ENCODE measurements at regions of chr11 and their contacts with region 1.

Region 1: GRCh38 chr11:58813693-58814092 is 30.8 kb downstream of the GLYATL2 start:
- DNase-seq: no peak
- H3K4me3 ChIP-seq: no peak overlapping the region
- H3K27ac ChIP-seq: no peak overlapping the region
- H3K4me1 ChIP-seq: no peaks in the 10 kb centered on the region
- H3K27me3 ChIP-seq: no peaks in the 10 kb centered on the region
- CTCF ChIP-seq: no peak
- POLR2A ChIP-seq: no peak

Region 2: DNA sequence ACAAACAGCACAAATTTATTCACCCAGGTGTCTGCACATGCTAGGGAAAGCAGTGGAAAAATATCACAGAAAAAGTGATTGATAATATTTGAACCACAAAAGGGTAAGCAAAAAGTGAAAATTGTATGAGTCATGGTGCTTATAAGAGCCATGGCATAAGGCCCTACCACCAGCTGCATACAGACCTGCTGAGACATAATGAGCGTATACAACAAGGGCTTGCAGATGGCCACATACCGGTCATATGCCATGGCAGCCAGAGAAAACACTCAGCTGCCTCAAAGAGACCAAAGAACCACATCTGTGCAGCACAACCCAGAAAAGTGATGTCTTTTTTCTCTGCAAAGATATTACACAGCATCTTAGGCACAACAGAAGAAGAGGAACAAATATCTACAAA is 1993.8 kb before region 1 on chr11:
- intact Hi-C with region 1: loop called (anchors 10 kb)
- DNase-seq: no peak
- H3K4me3 ChIP-seq: no peak overlapping the region
- H3K27ac ChIP-seq: no peak overlapping the region
- H3K4me1 ChIP-seq: no peaks in the 10 kb centered on the region
- H3K27me3 ChIP-seq: no peaks in the 10 kb centered on the region
- CTCF ChIP-seq: no peak
- POLR2A ChIP-seq: no peak

Region 3: GRCh38 chr11:58254936-58255335 is 558.8 kb before region 1 on chr11:
- intact Hi-C with region 1: no loop called
- DNase-seq: no peak
- H3K4me3 ChIP-seq: no peak overlapping the region
- H3K27ac ChIP-seq: no peak overlapping the region
- H3K4me1 ChIP-seq: no peaks in the 10 kb centered on the region
- H3K27me3 ChIP-seq: no peaks in the 10 kb centered on the region
- CTCF ChIP-seq: no peak
- POLR2A ChIP-seq: no peak

Region 4: DNA sequence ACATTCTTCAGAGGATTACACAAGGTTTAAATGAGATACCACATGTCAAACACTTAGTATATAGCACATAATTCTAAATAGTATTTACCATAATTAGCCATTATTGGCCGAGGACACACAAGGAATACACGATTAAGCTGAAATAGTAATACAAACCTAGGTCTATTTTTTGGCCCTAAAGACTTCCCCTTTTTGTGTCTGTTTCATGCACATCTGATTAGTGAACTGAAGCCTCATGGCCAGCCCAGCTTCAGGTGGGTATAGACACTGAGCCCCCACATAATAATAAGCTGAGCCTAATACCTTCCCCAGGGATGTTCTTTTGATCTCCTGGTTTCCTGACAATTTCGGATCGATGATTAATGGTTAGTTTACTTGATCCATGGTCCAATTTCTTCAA is 274.5 kb after region 1 on chr11:
- intact Hi-C with region 1: no loop called
- DNase-seq: no peak
- H3K4me3 ChIP-seq: no peak overlapping the region
- H3K27ac ChIP-seq: no peak overlapping the region
- H3K4me1 ChIP-seq: no peaks in the 10 kb centered on the region
- H3K27me3 ChIP-seq: no peaks in the 10 kb centered on the region
- CTCF ChIP-seq: no peak
- POLR2A ChIP-seq: no peak

Region 5: GRCh38 chr11:59283825-59284772 is 470.4 kb after region 1 on chr11:
- intact Hi-C with region 1: no loop called
- DNase-seq: peak in 1 of 2 donors; percentile 34
- H3K4me3 ChIP-seq: no peak overlapping the region
- H3K27ac ChIP-seq: no peak overlapping the region
- H3K4me1 ChIP-seq: no peaks in the 10 kb centered on the region
- H3K27me3 ChIP-seq: no peaks in the 10 kb centered on the region
- CTCF ChIP-seq: peak; percentile 56 to 66 (median 59)
- POLR2A ChIP-seq: no peak

Measured in vagina (tissue), 2 donors.